ENCODE measurements at regions of chr12 and their contacts with region 1.

Region 1: GRCh38 chr12:46268590-46269558 is at the start of gene SLC38A1:
- DNase-seq: peak; percentile 92
- H3K4me3 Mint-ChIP-seq: no peak within 1 kb of the TSS
- H3K27ac Mint-ChIP-seq: no peak within 1 kb of the TSS
- H3K4me1 Mint-ChIP-seq: peaks cover 34% of the 10 kb centered on the region
- H3K27me3 Mint-ChIP-seq: no peaks in the 10 kb centered on the region
- total RNA-seq, gene SLC38A1: 105 to 110 TPM

Region 2: GRCh38 chr12:46246021-46246700 is 22.7 kb before region 1 on chr12:
- CTCF ChIA-PET with region 1: no interaction called
- intact Hi-C with region 1: loop called (anchors 1 kb)
- DNase-seq: no peak
- H3K4me3 Mint-ChIP-seq: no peak overlapping the region
- H3K27ac Mint-ChIP-seq: peak overlapping the region; percentile 76
- H3K4me1 Mint-ChIP-seq: peaks cover 89% of the 10 kb centered on the region
- H3K27me3 Mint-ChIP-seq: no peaks in the 10 kb centered on the region

Region 3: DNA sequence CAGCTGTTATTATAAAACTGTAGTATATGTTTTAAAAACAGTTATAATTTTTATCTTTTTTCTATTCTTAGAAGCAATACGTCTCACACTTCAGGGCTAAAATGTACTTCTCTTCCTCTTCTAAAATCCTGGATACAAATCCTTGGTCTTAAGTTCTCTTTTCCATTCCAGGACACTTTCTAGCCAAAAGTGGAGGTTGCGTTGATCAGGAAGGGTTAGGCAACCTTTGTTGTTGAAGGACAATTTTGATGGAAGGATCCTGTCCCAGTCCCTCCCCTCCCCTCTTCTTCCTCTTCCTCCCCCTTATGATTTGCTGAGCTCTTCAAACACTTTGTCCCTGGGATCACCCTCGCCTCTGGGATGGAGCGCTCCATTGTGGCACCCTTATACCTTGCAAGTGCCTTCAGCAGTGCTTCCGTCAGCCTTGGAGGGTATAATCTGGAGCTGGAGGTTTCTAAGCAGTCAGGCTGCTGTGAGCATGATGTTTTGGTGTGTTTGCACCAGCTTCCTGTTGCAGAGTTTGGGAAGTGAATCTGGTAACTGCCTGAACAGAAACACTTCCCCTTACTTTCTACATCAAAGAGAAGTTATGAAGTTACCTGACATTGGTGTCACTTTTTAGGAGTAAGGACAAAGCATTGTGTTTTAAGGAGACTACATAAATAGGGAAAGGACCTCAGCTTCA is 191.1 kb after region 1 on chr12:
- CTCF ChIA-PET with region 1: no interaction called
- intact Hi-C with region 1: loop called (anchors 1 kb)
- DNase-seq: peak; percentile 48
- H3K4me3 Mint-ChIP-seq: peak overlapping the region; percentile 71
- H3K27ac Mint-ChIP-seq: peak overlapping the region; percentile 91
- H3K4me1 Mint-ChIP-seq: peaks cover 64% of the 10 kb centered on the region
- H3K27me3 Mint-ChIP-seq: no peaks in the 10 kb centered on the region

Region 4: GRCh38 chr12:46661110-46661845 is 392.4 kb after region 1 on chr12:
- CTCF ChIA-PET with region 1: no interaction called
- intact Hi-C with region 1: loop called (anchors 1 kb)
- DNase-seq: peak; percentile 25
- H3K4me3 Mint-ChIP-seq: no peak overlapping the region
- H3K27ac Mint-ChIP-seq: no peak overlapping the region
- H3K4me1 Mint-ChIP-seq: peaks cover 29% of the 10 kb centered on the region
- H3K27me3 Mint-ChIP-seq: no peaks in the 10 kb centered on the region

Region 5: DNA sequence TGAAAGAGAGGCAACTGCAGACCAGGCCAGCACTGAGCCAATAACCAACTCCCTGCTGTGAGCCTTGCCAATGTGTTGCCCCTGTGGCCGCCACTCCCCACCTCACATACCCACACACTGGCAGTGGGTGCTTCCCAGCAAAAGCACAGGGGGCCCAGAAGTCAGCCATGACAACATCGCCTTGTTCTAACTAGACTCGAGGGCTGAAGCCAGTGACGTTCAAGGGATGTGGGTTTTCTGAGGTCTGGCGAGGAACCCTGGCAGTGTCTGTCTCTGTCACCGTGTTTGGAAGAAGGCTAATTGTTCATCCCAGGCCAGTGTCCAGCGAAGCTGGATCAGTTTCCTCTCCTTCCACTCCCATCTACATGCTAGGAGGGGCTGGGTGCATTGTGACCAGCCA is 1122.7 kb after region 1 on chr12:
- CTCF ChIA-PET with region 1: no interaction called
- intact Hi-C with region 1: loop called (anchors 5 kb)
- DNase-seq: peak; percentile 88
- H3K4me3 Mint-ChIP-seq: peak overlapping the region; percentile 77
- H3K27ac Mint-ChIP-seq: peak overlapping the region; percentile 100
- H3K4me1 Mint-ChIP-seq: peaks cover 90% of the 10 kb centered on the region
- H3K27me3 Mint-ChIP-seq: no peaks in the 10 kb centered on the region

Measured in activated naive CD4-positive, alpha-beta T cell treated with anti-CD3 and anti-CD28 coated beads for 36 hours (primary cell).